SK-N-SH (cell line): ENCODE measurements at regions of chr19 and their contacts with region 1.

Region 1: DNA sequence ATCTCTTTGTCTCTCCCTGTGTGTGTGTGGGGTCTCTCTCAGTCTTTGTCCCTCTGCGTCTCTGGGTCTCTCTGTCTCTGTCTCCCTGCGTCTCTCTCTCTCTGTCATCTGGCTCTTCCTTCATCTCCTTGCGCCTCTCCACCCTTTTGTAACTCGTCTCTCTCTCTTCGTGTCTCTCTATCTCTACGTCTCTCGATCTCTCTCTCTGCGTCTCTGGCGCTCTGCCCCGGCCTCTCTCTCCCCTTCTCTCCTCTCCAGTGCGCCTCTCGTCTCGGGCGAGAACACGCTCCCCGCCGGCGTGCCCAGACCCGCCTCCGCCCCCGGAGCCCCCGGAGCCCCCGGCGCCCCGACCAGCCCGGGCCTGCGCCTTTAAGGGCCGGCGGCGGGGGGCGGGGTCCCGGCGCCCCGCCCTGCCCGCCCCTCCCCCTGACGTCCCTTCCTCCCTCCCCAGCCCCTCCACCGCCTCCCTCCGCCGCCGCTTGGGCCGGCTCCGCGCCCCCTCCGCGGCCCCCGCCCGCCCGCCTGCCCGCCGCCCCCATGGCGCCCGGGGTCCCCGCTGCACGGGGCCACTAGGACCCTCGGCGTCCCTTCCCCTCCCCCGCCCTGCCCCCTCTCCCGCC is at the start of gene MARK4:
- DNase-seq: peak; percentile 99
- H3K4me3 ChIP-seq: peak within 1 kb of the TSS; percentile 67 to 74
- H3K27ac ChIP-seq: peak within 1 kb of the TSS; percentile 13 to 58; a peak in 2 of 4 replicates
- H3K4me1 ChIP-seq: peaks cover 10 to 30% of the 10 kb centered on the region in 2 experiments; a peak in 2 of 4 replicates
- H3K27me3 ChIP-seq: no peaks in the 10 kb centered on the region
- CTCF ChIP-seq: no peak
- EP300 ChIP-seq: no peak
- RAD21 ChIP-seq: no peak
- polyA plus RNA-seq, gene MARK4: 9.8 and 16.3 TPM in 2 replicates

Region 2: DNA sequence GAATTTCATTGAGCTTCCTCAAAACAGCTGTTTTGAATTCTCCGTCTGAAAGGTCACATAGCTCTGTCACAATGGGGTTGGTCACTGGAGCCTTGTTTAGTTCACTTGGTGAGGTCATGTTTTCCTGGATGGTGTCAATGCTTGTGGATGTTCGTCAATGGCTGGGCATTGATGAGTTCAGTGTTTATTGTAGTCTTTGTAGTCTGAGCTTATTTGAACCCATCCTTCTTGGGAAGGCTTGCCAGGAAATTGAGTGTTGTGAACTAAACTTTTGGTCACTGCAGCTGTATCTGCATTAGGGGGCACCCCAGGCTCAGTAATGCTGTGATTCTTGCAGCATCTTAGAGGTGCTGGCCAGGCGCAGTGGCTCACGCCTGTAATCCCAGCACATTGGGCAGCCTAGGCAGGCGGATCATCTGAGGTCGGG is 50.4 kb before region 1 on chr19:
- CTCF ChIA-PET with region 1: interaction called, 13 read pairs
- POLR2A ChIA-PET with region 1: no interaction called
- DNase-seq: no peak
- H3K4me3 ChIP-seq: no peak overlapping the region
- H3K27ac ChIP-seq: no peak overlapping the region
- H3K4me1 ChIP-seq: no peaks in the 10 kb centered on the region
- H3K27me3 ChIP-seq: no peaks in the 10 kb centered on the region
- CTCF ChIP-seq: peak; percentile 46
- EP300 ChIP-seq: no peak
- RAD21 ChIP-seq: peak; percentile 68

Region 3: DNA sequence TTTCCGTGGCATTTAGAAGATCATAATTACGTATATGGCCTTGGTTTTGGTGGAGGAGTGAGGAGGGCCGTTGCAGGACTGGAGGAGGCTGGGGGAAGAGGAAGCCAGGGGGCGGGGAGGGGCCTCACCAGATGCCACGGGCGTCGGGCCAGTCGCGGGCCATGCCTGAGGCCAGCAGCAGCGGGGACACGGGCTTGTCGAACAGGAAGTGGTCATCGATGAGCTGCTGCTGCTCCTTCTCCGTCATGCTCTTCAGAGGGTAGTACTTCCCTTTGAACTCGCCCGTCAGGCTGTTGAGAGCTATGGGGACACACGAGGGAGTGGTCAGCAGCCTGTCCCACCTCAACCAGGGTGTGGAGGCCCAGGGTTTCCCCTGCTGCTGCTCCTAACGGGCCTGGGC is 60.7 kb after region 1 on chr19:
- CTCF ChIA-PET with region 1: no interaction called
- POLR2A ChIA-PET with region 1: no interaction called
- DNase-seq: no peak
- H3K4me3 ChIP-seq: no peak overlapping the region
- H3K27ac ChIP-seq: no peak overlapping the region
- H3K4me1 ChIP-seq: peaks cover 0 to 3% of the 10 kb centered on the region in 2 experiments; a peak in 1 of 4 replicates
- H3K27me3 ChIP-seq: peaks cover 23% of the 10 kb centered on the region; the same call in 1 of the 2 replicates
- CTCF ChIP-seq: no peak
- EP300 ChIP-seq: no peak
- RAD21 ChIP-seq: no peak